ENCODE measurements at regions of chr1 and their contacts with region 1.

Region 1: GRCh38 chr1:97524211-97524610 is 396.6 kb downstream of the DPYD start:
- DNase-seq: no peak
- H3K4me3 ChIP-seq: no peak overlapping the region
- CTCF ChIP-seq: no peak

Region 2: DNA sequence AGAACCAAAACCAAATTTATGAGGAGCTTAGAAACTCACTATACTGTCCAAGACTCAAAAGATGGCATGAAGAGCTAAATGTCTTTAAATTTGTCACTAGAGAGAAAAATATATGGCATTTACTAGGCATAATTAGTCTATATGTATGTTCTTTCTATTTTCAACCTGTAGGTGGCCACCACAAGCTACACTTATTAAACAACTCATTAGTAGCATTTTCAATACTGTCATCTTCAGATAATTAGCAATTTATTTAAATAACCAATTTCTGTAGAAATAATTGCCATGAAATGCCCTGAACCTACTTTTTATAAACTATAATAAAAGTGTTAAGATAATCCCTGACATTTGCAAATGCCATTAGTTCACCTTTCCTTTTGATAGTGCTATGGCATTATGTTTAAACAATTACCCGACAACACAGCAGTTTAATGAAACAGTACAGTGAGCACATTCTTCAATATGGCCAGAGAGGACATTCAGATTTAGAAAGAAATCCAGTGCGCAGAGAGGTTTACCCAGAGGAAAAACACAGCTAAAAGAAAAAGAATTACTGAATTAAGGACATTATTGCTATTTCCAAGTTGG is 280.1 kb before region 1 on chr1:
- CTCF ChIA-PET with region 1: interaction called, 21 read pairs
- POLR2A ChIA-PET with region 1: no interaction called
- DNase-seq: no peak
- H3K4me3 ChIP-seq: no peak overlapping the region
- CTCF ChIP-seq: peak; percentile 12

Region 3: GRCh38 chr1:97270508-97271307 is 253.5 kb before region 1 on chr1:
- CTCF ChIA-PET with region 1: no interaction called
- POLR2A ChIA-PET with region 1: no interaction called
- DNase-seq: no peak
- H3K4me3 ChIP-seq: no peak overlapping the region
- CTCF ChIP-seq: no peak

Region 4: DNA sequence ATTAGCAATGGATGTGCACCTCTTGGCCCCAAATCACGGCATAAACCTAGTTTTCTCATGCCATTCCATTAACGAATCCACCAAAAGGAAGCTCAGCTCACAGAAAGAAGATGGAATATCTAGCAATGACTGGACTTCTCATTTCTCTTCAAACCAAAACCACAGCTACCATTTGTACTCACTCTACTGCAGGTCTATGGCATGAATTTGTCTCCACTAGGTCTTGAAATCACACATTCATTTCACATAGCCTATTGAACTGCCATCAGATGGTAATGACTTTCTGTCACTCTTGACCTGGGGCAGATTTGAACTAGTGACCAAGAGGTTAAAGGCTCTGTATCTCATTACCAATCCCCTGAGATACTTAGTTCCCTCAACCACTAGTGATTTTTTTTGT is 13.9 kb after region 1 on chr1:
- CTCF ChIA-PET with region 1: interaction called, 12 read pairs
- POLR2A ChIA-PET with region 1: no interaction called
- DNase-seq: no peak
- H3K4me3 ChIP-seq: no peak overlapping the region
- CTCF ChIP-seq: no peak

Region 5: GRCh38 chr1:97767381-97767780 is 243.2 kb after region 1 on chr1:
- CTCF ChIA-PET with region 1: no interaction called
- POLR2A ChIA-PET with region 1: no interaction called
- DNase-seq: no peak
- H3K4me3 ChIP-seq: no peak overlapping the region
- CTCF ChIP-seq: no peak

Measured in AG04449 (cell line).